ENCODE measurements at regions of chr4 and their contacts with region 1.

Region 1: DNA sequence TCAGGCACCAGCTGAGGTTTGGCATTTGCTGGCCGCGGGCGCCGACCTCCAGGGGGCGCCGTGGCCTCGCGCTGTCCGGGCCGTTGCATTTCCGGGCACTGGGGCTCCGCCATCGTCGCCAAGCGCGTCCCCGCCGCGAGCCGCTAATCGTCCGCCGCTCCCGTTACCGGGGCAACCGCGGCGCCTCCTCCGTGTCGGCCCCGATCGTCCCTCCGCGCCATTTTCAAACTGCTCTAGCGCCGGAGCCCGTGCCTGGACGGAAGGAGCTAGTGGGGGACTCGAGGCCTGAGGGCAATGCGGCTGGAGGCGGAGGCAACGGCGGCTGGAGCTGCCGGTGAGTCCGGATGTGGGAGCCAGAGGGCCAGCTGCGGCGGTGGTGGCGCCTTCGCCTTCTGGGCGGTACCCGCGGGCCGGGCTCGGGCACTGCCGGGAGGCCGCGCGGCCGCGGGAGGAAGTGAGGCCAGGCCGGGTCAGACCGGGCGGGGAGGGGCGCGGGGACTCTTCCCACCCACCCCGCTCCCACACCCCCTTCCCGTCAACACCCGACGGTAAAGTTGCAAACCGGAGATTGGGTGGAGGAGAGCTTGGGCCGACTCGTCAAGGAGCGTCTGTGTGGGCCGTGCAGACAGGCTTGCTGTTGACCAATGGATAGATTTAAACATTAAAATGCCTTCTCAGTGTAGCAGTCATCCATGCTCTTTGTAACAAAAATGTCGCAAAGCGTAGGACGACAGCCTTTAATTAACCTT is at the start of gene CEP135:
- DNase-seq: peak; percentile 93
- ATAC-seq: peak; percentile 83
- H3K4me3 Mint-ChIP-seq: peak within 1 kb of the TSS; percentile 83
- H3K27ac Mint-ChIP-seq: peak within 1 kb of the TSS; percentile 94
- H3K4me1 Mint-ChIP-seq: peaks cover 23% of the 10 kb centered on the region
- H3K27me3 Mint-ChIP-seq: no peaks in the 10 kb centered on the region
- CTCF ChIP-seq: no peak
- total RNA-seq, gene CEP135: 12.5 to 12.9 TPM

Region 2: GRCh38 chr4:55904576-55904975 is 44.3 kb before region 1 on chr4:
- CTCF ChIA-PET with region 1: interaction called, 11 read pairs
- POLR2A ChIA-PET with region 1: no interaction called
- intact Hi-C with region 1: no loop called
- DNase-seq: no peak
- ATAC-seq: no peak
- H3K4me3 Mint-ChIP-seq: no peak overlapping the region
- H3K27ac Mint-ChIP-seq: peak overlapping the region; percentile 51
- H3K4me1 Mint-ChIP-seq: peaks cover 32% of the 10 kb centered on the region
- H3K27me3 Mint-ChIP-seq: no peaks in the 10 kb centered on the region
- CTCF ChIP-seq: no peak

Region 3: GRCh38 chr4:55965585-55965984 is 16.7 kb after region 1 on chr4:
- CTCF ChIA-PET with region 1: interaction called, 28 read pairs
- POLR2A ChIA-PET with region 1: interaction called, 5 read pairs
- intact Hi-C with region 1: no loop called
- DNase-seq: no peak
- ATAC-seq: no peak
- H3K4me3 Mint-ChIP-seq: no peak overlapping the region
- H3K27ac Mint-ChIP-seq: no peak overlapping the region
- H3K4me1 Mint-ChIP-seq: no peaks in the 10 kb centered on the region
- H3K27me3 Mint-ChIP-seq: no peaks in the 10 kb centered on the region
- CTCF ChIP-seq: no peak

Region 4: DNA sequence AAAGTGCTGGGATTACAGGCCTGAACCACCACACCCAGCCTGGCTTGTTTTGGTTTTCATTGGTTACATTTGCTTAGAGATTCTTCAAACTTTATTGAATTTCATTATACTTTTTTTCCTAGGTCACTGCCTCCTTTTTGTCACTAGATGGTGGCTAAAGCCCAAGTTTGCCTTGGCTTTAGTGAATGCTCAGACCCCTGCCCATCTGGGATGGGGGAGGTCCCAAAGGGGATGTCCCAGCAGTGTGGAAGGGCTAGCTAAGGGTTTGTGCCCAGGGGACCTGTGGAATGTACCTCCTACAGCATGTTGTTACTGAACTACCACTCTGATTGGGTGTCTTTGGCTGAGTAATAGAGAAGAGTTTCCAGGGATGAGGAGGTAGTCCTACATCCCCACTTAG is 58.3 kb after region 1 on chr4:
- CTCF ChIA-PET with region 1: no interaction called
- POLR2A ChIA-PET with region 1: no interaction called
- intact Hi-C with region 1: no loop called
- DNase-seq: no peak
- ATAC-seq: no peak
- H3K4me3 Mint-ChIP-seq: no peak overlapping the region
- H3K27ac Mint-ChIP-seq: no peak overlapping the region
- H3K4me1 Mint-ChIP-seq: no peaks in the 10 kb centered on the region
- H3K27me3 Mint-ChIP-seq: no peaks in the 10 kb centered on the region
- CTCF ChIP-seq: no peak

Region 5: DNA sequence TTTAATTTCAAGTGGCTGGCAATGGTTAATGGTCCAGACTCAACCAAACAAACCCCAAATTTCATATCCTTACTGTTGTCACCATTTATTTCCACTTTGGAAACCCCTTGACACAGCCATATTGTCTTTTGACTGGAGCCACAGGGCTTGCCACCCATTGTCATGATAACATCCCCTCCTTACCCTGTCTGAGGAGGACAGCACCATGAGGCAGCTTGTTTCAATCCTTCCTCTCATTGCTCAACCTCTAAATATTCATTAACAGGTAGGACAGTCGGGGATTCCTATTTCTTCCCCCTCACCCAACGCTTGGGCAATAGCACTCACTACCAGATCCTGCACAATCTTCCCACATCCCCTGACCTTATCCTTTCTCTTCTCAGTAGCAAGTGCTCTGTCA is 91.9 kb after region 1 on chr4:
- CTCF ChIA-PET with region 1: no interaction called
- POLR2A ChIA-PET with region 1: no interaction called
- intact Hi-C with region 1: loop called (anchors 5 kb)
- DNase-seq: no peak
- ATAC-seq: no peak
- H3K4me3 Mint-ChIP-seq: no peak overlapping the region
- H3K27ac Mint-ChIP-seq: no peak overlapping the region
- H3K4me1 Mint-ChIP-seq: no peaks in the 10 kb centered on the region
- H3K27me3 Mint-ChIP-seq: peaks cover 17% of the 10 kb centered on the region
- CTCF ChIP-seq: no peak

Region 6: DNA sequence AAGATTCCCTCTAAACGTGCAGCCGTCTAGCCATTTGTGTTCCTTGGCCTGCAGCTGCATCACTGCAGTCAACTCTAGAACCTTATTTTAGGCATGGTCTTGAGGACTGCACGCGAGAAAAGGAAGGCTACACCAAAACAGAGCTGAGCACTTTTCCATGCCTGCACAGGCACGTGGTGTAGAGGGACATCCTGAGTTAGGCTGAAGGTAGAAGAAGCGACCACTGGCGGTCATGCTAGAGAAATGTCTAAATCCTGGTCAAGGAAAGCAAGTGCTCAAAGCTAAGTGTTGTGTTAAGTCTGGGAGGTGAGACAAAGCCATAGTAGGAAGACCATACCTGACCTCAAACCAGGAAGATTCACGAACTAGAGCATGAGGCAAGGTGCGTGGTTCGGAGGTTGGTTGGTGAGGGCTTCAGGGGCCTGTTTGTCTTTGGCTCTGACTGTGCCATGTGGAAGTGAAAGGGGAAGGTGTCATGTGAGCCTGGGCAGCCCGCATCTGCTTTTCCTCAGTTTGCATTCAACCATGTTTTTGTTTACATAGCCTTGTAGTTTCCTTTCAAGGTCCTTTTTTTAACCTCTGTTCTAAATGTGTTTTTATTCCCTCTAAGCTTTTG is 234.6 kb after region 1 on chr4:
- CTCF ChIA-PET with region 1: no interaction called
- POLR2A ChIA-PET with region 1: no interaction called
- intact Hi-C with region 1: no loop called
- DNase-seq: no peak
- ATAC-seq: no peak
- H3K4me3 Mint-ChIP-seq: no peak overlapping the region
- H3K27ac Mint-ChIP-seq: no peak overlapping the region
- H3K4me1 Mint-ChIP-seq: peaks cover 3% of the 10 kb centered on the region
- H3K27me3 Mint-ChIP-seq: peaks cover 4% of the 10 kb centered on the region
- CTCF ChIP-seq: no peak

Region 7: GRCh38 chr4:56301181-56302076 is 352.5 kb after region 1 on chr4:
- CTCF ChIA-PET with region 1: interaction called, 15 read pairs
- POLR2A ChIA-PET with region 1: no interaction called
- intact Hi-C with region 1: loop called (anchors 5 kb)
- DNase-seq: peak; percentile 80
- ATAC-seq: peak; percentile 95
- H3K4me3 Mint-ChIP-seq: no peak overlapping the region
- H3K27ac Mint-ChIP-seq: no peak overlapping the region
- H3K4me1 Mint-ChIP-seq: peaks cover 4% of the 10 kb centered on the region
- H3K27me3 Mint-ChIP-seq: peaks cover 2% of the 10 kb centered on the region
- CTCF ChIP-seq: peak; percentile 97